Uterus (tissue), 4 donors: ENCODE measurements at regions of chr17 and their contacts with region 1.

Region 1: GRCh38 chr17:66165513-66166123 is 26.3 kb downstream of the CEP112 start:
- DNase-seq: no peak
- H3K4me3 ChIP-seq: no peak overlapping the region
- H3K27ac ChIP-seq: no peak overlapping the region
- H3K4me1 ChIP-seq: no peaks in the 10 kb centered on the region
- H3K27me3 ChIP-seq: no peaks in the 10 kb centered on the region
- CTCF ChIP-seq: peak; percentile 60 to 78 (median 69)
- POLR2A ChIP-seq: no peak

Region 2: GRCh38 chr17:65294179-65294720 is 871.4 kb before region 1 on chr17:
- intact Hi-C with region 1: loop called (anchors 5 kb)
- DNase-seq: peak; percentile 57 to 67
- H3K4me3 ChIP-seq: no peak overlapping the region
- H3K27ac ChIP-seq: no peak overlapping the region
- H3K4me1 ChIP-seq: no peaks in the 10 kb centered on the region
- H3K27me3 ChIP-seq: no peaks in the 10 kb centered on the region
- CTCF ChIP-seq: peak; percentile 67 to 80 (median 78)
- POLR2A ChIP-seq: no peak

Region 3: GRCh38 chr17:66275651-66276050 is 110.0 kb after region 1 on chr17:
- intact Hi-C with region 1: no loop called
- DNase-seq: no peak
- H3K4me3 ChIP-seq: no peak overlapping the region
- H3K27ac ChIP-seq: no peak overlapping the region
- H3K4me1 ChIP-seq: no peaks in the 10 kb centered on the region
- H3K27me3 ChIP-seq: no peaks in the 10 kb centered on the region
- CTCF ChIP-seq: no peak
- POLR2A ChIP-seq: no peak